Activated naive CD4-positive, alpha-beta T cell treated with anti-CD3 and anti-CD28 coated beads, Interleukin-2, amount 10 ng/mL, durations not matched to agents 7 days and 5 days (primary cell): ENCODE measurements at regions of chr1 and their contacts with region 1.

Region 1: GRCh38 chr1:160997323-160998038 is 23.5 kb downstream of the F11R start:
- DNase-seq: peak; percentile 67
- H3K4me3 Mint-ChIP-seq: no peak overlapping the region
- H3K27ac Mint-ChIP-seq: peak overlapping the region; percentile 12
- H3K4me1 Mint-ChIP-seq: peaks cover 5% of the 10 kb centered on the region
- H3K27me3 Mint-ChIP-seq: no peaks in the 10 kb centered on the region

Region 2: GRCh38 chr1:160795951-160796383 is 201.5 kb before region 1 on chr1 and contains the start of gene LY9:
- CTCF ChIA-PET with region 1: no interaction called
- DNase-seq: peak; percentile 89
- H3K4me3 Mint-ChIP-seq: peak within 1 kb of the TSS; percentile 96
- H3K27ac Mint-ChIP-seq: peak within 1 kb of the TSS; percentile 99
- H3K4me1 Mint-ChIP-seq: peaks cover 63% of the 10 kb centered on the region
- H3K27me3 Mint-ChIP-seq: no peaks in the 10 kb centered on the region

Region 3: GRCh38 chr1:160981584-160982411 is 15.7 kb before region 1 on chr1:
- CTCF ChIA-PET with region 1: no interaction called
- DNase-seq: peak; percentile 30
- H3K4me3 Mint-ChIP-seq: peak overlapping the region; percentile 61
- H3K27ac Mint-ChIP-seq: no peak overlapping the region
- H3K4me1 Mint-ChIP-seq: peaks cover 11% of the 10 kb centered on the region
- H3K27me3 Mint-ChIP-seq: peaks cover 54% of the 10 kb centered on the region

Region 4: DNA sequence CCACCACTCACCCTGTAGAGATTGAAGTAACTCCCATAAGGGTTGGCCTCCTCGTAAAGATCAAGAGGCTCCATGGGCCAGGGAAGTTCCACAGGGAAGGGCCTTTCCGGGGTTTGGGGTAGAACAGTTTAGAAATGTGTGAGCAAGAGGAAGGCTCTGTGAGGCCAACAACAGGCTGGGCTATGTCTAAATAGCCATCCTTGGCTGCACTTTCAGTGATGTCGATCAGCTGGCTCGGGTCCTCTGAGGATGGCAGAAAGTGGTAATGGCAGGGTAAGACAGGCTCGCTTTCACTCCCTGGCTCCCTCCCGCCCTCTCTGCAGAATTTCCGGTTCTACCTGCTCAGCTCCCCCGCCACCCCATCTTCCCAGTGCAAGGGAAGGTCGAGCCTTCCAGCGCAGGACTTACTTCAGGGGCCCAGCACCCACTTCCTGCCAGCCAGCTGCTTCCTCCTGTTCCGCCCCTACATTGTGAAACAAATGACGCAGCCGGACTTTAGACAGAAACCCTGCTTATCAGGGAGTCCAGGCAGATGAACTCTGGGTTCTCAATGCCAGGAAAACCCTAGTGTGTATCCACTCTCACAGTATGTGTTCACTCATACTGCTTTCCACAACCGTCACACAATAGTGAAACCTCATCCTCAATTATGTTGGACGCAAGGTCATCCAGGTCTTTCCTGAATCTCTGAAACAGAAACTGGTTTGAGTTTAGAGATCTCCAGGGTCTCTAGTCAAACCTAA is 16.2 kb after region 1 on chr1:
- CTCF ChIA-PET with region 1: interaction called, 19 read pairs
- DNase-seq: peak; percentile 80
- H3K4me3 Mint-ChIP-seq: peak overlapping the region; percentile 68
- H3K27ac Mint-ChIP-seq: peak overlapping the region; percentile 96
- H3K4me1 Mint-ChIP-seq: peaks cover 28% of the 10 kb centered on the region
- H3K27me3 Mint-ChIP-seq: no peaks in the 10 kb centered on the region

Region 5: DNA sequence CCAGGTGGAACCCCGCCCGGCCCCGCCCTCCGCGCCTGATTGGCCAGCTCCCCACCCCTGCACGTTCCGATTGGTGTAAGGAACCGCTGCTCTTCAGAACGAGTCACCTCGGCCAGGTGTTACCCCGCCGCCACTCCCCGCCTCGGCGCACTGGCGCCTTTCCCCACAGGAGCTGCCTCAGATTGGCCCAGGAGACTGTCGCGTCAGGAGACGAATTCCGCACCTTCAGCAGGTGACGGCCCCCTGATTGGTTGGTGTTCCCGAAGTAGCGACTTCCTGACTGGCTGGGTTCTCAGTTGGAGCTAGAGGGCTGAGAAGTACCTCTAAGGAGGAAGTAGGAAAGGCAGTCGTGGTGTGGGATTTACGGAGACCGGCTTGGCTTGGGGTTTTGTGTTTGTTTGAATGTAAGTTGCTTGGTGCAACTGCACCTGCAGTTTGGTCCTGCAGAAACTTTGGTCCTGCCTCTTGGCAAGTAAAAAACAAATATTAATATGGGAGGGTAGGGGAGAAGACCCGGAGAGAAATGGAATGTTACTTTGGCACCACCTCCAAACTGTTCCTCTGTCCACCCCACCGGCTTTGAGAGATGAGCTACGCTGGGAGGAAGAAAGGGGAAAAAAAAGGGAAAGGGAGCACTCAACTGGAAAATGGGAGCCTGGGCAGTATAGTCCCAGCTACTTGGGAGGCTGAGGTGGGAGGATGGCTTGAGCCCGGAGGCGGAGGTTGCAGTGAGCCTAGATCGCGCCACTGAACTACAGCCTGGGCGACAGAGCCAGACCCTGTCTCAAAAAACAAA is 23.9 kb after region 1 on chr1:
- CTCF ChIA-PET with region 1: interaction called, 22 read pairs
- DNase-seq: peak; percentile 93
- H3K4me3 Mint-ChIP-seq: peak overlapping the region; percentile 78
- H3K27ac Mint-ChIP-seq: peak overlapping the region; percentile 76
- H3K4me1 Mint-ChIP-seq: peaks cover 34% of the 10 kb centered on the region
- H3K27me3 Mint-ChIP-seq: peaks cover 9% of the 10 kb centered on the region

Region 6: DNA sequence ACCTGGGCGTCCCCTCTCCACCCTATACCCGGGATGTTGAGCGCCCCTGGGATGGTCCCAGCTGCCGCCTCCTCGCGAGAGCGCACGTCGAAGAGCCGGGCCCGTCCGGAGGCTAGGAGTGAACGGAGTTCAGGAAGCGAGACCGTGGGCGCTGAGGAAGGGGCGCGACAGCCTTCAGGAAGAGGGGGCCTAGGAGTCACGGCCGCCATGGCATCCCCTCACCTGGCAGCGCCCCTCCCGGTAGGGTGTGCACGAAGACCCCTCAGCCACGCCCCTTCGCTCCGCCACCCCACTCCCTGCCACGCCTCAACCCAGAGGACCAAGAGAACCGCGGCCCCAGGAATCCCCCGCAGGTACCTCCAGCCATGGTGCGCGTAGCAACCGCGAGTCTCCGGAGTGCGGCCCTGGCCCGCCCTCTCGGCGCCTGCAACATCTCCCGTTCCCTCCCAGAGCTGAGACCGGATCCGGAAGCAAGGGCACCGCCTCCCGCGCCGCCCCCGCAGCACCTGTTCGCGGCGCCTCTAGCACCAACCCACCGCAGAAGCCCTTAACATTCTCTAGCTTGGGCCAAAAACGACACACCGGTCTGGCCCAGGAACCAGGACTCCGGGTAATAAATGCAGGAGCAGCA is 41.2 kb after region 1 on chr1 and contains the start of gene TSTD1:
- CTCF ChIA-PET with region 1: interaction called, 37 read pairs
- DNase-seq: peak; percentile 91
- H3K4me3 Mint-ChIP-seq: peak within 1 kb of the TSS; percentile 92
- H3K27ac Mint-ChIP-seq: peak within 1 kb of the TSS; percentile 95
- H3K4me1 Mint-ChIP-seq: peaks cover 48% of the 10 kb centered on the region
- H3K27me3 Mint-ChIP-seq: no peaks in the 10 kb centered on the region

Region 7: GRCh38 chr1:161082991-161083742 is 85.7 kb after region 1 on chr1:
- CTCF ChIA-PET with region 1: no interaction called
- DNase-seq: no peak
- H3K4me3 Mint-ChIP-seq: no peak overlapping the region
- H3K27ac Mint-ChIP-seq: no peak overlapping the region
- H3K4me1 Mint-ChIP-seq: peaks cover 2% of the 10 kb centered on the region
- H3K27me3 Mint-ChIP-seq: peaks cover 52% of the 10 kb centered on the region

Region 8: DNA sequence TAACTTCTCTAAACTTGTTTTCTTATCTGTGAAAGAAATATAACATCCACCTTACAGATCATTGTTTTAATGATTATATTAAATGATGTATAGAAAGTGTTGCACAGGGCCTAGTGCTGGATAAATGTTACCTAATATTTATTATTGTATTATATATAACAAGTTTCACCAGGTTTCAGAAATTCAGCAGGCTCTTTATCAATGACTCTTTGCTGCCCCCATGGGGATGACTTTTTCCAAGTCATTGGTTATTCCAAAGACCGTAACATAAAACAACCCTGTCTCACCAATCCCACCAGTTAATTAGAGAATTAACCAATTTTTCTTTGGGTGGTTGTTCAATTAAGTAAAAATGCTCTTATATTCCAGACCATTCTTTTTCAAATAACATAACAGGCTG is 142.3 kb after region 1 on chr1:
- CTCF ChIA-PET with region 1: interaction called, 12 read pairs
- DNase-seq: peak; percentile 63
- H3K4me3 Mint-ChIP-seq: no peak overlapping the region
- H3K27ac Mint-ChIP-seq: no peak overlapping the region
- H3K4me1 Mint-ChIP-seq: peaks cover 10% of the 10 kb centered on the region
- H3K27me3 Mint-ChIP-seq: no peaks in the 10 kb centered on the region